ENCODE measurements at regions of chr6 and their contacts with region 1.

Region 1: DNA sequence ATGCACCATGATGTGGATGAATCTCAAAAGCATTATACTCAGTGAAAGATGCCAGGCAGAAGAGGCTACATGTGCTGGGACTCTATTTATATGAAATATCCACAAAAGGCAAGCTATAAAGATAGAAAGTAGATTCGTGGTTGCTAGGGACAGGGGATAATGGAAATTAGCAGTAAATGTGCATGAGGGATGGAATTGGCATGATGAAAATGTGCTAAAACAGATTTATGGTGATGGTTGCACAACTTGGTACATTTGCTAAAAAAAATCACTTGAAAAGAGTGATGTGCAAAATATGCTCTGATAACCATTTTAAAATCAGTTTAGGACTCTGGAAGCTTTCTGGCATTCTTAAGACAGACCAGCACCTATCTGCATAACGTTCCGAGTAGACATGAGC is 61.6 kb downstream of the ALDH8A1 start:
- DNase-seq: no peak
- H3K4me3 ChIP-seq: no peak overlapping the region
- H3K27ac ChIP-seq: no peak overlapping the region
- H3K27me3 ChIP-seq: no peaks in the 10 kb centered on the region
- CTCF ChIP-seq: no peak

Region 2: DNA sequence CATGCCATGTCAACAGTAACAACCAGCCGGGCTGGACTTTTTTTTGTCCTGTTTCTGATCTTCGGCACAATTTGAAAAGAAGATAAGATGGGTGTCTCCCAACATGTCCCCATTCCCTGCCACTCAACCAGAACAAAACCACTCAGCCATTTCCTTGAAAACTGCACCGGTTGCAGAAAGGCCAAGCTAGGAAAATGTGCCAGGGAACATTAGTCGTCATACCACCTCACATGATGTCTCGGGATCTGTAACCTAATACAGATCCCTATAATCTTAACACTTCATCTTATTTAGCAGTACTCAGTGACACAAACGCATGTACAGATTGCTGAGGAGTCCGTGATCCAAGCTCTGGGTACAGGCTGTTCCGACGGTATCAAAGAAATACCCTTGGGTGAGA is 15.1 kb after region 1 on chr6:
- CTCF ChIA-PET with region 1: no interaction called
- POLR2A ChIA-PET with region 1: interaction called, 15 read pairs
- DNase-seq: no peak
- H3K4me3 ChIP-seq: no peak overlapping the region
- H3K27ac ChIP-seq: no peak overlapping the region
- H3K27me3 ChIP-seq: no peaks in the 10 kb centered on the region
- CTCF ChIP-seq: no peak